GM10248 (cell line): ENCODE measurements at regions of chr18 and their contacts with region 1.

Region 1: DNA sequence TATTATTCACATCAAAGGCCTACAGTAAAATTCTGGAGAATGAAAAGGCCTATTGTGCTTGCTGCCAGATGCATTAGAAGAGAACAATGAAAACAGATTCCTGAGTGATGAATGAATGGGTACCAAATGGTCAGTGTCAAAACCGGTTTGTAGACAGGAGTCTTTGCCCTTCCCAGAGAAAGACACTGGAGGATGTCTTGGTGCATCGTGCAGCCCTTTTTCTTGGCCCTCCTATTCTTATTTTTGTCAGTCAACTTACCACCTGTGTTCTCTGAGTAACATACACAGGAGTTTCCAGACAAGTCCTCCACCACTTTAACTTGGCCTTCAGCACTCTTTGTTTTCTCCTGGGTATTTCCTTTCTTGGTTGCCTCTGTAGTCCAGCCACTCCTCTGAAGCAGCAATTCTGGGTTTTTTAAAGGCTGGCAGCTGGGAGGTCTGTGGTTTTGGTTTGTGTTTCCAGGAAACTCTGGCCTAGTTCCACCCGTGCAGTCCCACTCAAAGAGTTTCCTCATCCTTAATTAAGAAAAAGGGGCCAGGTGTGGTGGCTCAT is 29.4 kb downstream of the PSTPIP2 start:
- DNase-seq: no peak
- CTCF ChIP-seq: no peak

Region 2: GRCh38 chr18:46054956-46055837 is 12.6 kb after region 1 on chr18:
- CTCF ChIA-PET with region 1: interaction called, 10 read pairs
- POLR2A ChIA-PET with region 1: no interaction called
- DNase-seq: no peak
- CTCF ChIP-seq: no peak

Region 3: DNA sequence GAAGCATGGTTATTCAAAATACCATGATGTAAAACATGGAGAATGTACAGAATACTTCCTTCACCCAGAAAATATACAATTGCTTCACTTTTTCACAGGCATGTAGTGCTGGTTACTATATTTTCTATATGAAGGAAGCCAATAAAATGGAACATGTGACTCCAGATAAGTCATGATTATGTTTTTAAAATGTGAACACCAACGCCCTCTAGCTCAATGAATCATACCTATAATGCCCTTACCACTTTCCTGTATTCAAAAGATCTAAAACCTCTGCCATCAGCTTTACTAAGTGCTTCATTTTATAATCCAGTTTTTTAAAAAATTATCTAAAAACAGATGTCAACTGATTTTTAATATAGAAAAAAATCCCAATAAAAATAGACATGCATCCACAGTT is 1828.0 kb after region 1 on chr18:
- CTCF ChIA-PET with region 1: no interaction called
- POLR2A ChIA-PET with region 1: interaction called, 12 read pairs
- DNase-seq: no peak
- CTCF ChIP-seq: no peak